Activated T-helper 2 cell treated with anti-CD3 and anti-CD28 coated beads, Interferon-gamma antibody, Interleukin-2, Interleukin-4, amounts not matched to agents 10 μg/mL and 5 μg/mL and 100 μg/mL, durations not matched to agents 14 hours and 24 hours and 36 hours (primary cell): ENCODE measurements at regions of chr17 and their contacts with region 1.

Region 1: GRCh38 chr17:78818932-78819331 is 21.7 kb downstream of the USP36 start:
- DNase-seq: peak; percentile 65
- H3K4me3 Mint-ChIP-seq: peak overlapping the region; percentile 68
- H3K27ac Mint-ChIP-seq: peak overlapping the region; percentile 94
- H3K4me1 Mint-ChIP-seq: peaks cover 54% of the 10 kb centered on the region
- H3K27me3 Mint-ChIP-seq: no peaks in the 10 kb centered on the region

Region 2: DNA sequence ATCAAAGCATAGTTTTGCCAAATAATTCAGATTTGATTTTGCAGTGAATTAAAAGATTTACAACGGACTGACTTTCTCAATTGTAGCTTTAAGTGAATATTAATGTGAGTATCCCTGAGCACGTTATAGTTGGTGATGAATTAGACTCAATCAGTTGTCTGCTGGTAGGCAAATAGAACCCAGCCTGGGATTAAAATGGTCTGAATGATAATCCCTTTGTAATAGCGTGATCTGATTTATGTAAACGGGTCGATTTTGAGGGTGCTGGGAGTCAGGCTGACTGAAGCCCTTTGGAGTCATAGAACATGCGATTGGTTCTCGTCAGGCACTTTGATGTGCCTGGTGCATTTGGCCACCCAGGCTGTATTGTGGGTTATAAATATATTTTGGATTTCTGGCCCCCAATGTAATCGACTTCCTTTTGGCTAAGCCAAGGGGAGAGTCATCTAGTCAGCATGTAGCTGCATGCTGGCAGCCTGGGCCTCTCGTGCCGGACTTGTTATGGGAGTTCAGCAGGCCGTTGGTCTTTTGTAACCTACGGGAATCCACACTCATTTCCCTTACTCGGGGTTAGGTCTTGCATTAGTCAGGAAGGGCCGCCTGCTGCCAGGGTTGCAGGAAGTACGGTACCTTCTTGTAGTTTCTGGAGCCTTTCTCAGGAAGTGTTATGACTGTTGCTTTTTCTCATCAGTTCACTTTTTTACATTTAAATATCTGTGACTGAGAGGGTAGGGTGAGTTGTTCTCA is 435.0 kb before region 1 on chr17:
- intact Hi-C with region 1: loop called (anchors 5 kb)
- DNase-seq: peak; percentile 38
- H3K4me3 Mint-ChIP-seq: peak overlapping the region; percentile 69
- H3K27ac Mint-ChIP-seq: peak overlapping the region; percentile 96
- H3K4me1 Mint-ChIP-seq: peaks cover 73% of the 10 kb centered on the region
- H3K27me3 Mint-ChIP-seq: no peaks in the 10 kb centered on the region

Region 3: GRCh38 chr17:78708510-78708973 is 110.4 kb before region 1 on chr17:
- intact Hi-C with region 1: loop called (anchors 5 kb)
- DNase-seq: peak; percentile 45
- H3K4me3 Mint-ChIP-seq: peak overlapping the region; percentile 66
- H3K27ac Mint-ChIP-seq: peak overlapping the region; percentile 75
- H3K4me1 Mint-ChIP-seq: peaks cover 48% of the 10 kb centered on the region
- H3K27me3 Mint-ChIP-seq: no peaks in the 10 kb centered on the region

Region 4: DNA sequence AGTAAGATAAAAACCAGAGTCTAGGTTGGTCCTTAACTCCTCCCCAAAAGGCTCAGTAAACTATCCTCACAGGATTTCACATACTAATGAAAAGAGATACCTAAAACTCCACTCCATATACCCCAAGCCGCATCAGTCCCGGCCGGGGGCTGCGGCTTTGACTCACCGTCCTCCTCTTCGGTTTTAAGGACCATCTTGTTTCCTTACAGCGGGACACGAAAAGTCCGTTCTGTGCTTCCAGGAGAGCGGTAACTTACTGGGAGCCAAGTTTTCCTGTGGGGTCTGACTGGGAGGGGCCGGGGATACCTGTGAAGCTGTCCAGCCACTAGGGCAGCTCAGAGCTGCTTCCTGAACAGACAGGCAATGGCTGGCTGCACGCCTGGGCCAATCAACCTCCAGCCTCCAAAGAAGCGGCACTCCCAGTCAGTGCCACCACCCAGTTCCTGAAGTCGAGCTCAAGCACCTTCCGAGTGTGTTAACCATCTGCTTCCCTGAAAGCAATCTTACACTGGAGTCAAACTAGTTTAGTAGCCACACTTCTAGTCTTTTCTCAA is 82.3 kb before region 1 on chr17:
- intact Hi-C with region 1: loop called (anchors 5 kb)
- DNase-seq: peak; percentile 55
- H3K4me3 Mint-ChIP-seq: peak overlapping the region; percentile 87
- H3K27ac Mint-ChIP-seq: peak overlapping the region; percentile 84
- H3K4me1 Mint-ChIP-seq: peaks cover 70% of the 10 kb centered on the region
- H3K27me3 Mint-ChIP-seq: no peaks in the 10 kb centered on the region

Region 5: DNA sequence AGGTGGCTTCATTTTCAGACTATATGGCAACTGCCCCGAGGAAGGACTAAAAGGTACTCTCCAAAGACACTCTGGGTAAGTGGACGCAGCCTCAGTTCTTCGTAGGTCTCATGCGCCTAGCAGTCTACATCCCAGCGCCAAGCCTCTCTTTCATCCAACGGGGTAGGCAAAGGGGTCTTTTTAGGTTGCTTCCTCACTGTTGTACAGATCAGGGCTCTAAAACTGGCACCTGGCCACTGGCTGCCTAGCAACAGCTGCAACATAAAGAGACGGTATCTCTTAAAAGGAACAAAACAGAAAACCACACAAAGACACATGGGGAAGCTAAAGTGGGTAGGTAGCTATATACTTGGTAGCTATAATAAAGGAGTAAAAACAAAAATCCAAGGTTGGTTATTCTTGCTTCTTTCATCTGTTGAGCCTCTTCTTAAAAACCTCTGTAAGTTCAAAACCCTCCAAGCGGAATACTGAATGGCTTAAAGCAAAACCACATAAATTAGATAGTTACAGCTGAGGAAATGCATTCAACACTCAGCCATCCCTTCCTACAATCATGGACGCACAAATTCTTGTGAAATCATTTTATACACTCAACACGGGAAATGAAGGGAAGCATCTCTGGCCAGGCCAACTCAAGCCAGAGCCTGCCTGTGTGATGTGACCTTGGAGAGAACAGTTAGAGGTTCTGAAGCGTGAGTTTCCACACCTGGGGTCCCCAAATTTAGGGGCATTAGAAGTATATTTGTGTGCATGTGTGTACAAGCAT is 59.5 kb before region 1 on chr17:
- intact Hi-C with region 1: loop called (anchors 5 kb)
- DNase-seq: peak; percentile 69
- H3K4me3 Mint-ChIP-seq: peak overlapping the region; percentile 51
- H3K27ac Mint-ChIP-seq: peak overlapping the region; percentile 98
- H3K4me1 Mint-ChIP-seq: peaks cover 54% of the 10 kb centered on the region
- H3K27me3 Mint-ChIP-seq: no peaks in the 10 kb centered on the region

Region 6: GRCh38 chr17:78781948-78782916 is 36.7 kb before region 1 on chr17 and contains the start of gene CYTH1:
- intact Hi-C with region 1: loop called (anchors 2 kb)
- DNase-seq: peak; percentile 96
- H3K4me3 Mint-ChIP-seq: peak within 1 kb of the TSS; percentile 86
- H3K27ac Mint-ChIP-seq: peak within 1 kb of the TSS; percentile 96
- H3K4me1 Mint-ChIP-seq: peaks cover 46% of the 10 kb centered on the region
- H3K27me3 Mint-ChIP-seq: no peaks in the 10 kb centered on the region
- total RNA-seq, gene CYTH1: 83.5 and 95.7 TPM in 2 replicates

Region 7: GRCh38 chr17:78840725-78841611 is 22.0 kb after region 1 on chr17 and contains the start of gene USP36:
- intact Hi-C with region 1: loop called (anchors 1 kb)
- DNase-seq: peak; percentile 99
- H3K4me3 Mint-ChIP-seq: peak within 1 kb of the TSS; percentile 91
- H3K27ac Mint-ChIP-seq: peak within 1 kb of the TSS; percentile 94
- H3K4me1 Mint-ChIP-seq: peaks cover 35% of the 10 kb centered on the region
- H3K27me3 Mint-ChIP-seq: no peaks in the 10 kb centered on the region
- total RNA-seq, gene USP36: 103 and 105 TPM in 2 replicates

Region 8: DNA sequence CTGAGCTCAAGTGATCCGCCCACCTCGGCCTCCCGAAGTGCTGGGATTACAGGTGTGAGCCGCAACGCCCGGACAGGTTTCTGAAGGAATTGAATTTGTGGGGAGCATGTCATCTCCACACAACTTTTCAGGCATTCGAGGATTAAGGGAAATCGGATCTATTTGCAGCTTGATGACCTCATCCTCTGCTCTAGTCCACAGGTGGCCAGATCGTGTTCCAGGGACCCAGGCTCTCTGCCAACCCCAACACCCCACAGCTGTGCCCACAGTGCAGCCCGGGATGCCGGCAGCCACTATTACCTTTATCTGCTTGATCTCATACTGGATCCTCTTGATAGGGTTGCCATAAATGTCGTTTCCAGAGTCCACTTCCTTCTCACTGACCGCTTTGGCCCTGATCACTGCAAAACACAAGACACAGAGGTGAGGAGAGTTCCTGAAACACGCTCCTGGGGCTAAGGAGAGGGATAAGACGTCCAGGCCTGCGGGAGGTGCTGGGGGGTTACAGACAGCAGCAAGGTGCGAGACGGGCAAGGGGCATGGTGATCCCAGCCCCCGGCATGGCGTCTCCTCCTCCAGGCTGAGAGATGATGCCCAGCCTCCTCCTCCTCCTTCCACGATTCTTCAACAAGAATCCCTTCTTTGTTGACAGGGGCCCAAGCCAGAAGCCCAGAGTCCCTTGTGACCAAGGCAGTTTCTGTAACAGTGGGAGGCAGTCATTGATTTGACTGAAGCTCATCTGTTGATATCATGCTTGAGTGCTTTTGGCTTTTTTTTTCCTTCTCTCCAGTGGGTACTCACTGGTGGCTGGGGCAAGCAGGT is 54.8 kb after region 1 on chr17:
- intact Hi-C with region 1: no loop called
- DNase-seq: no peak
- H3K4me3 Mint-ChIP-seq: no peak overlapping the region
- H3K27ac Mint-ChIP-seq: no peak overlapping the region
- H3K4me1 Mint-ChIP-seq: peaks cover 3% of the 10 kb centered on the region
- H3K27me3 Mint-ChIP-seq: peaks cover 17% of the 10 kb centered on the region